Sigmoid colon (tissue), 7 donors: ENCODE measurements at regions of chr9 and their contacts with region 1.

Region 1: GRCh38 chr9:110256380-110257096 is at the start of gene TXN:
- DNase-seq: peak; percentile 94
- H3K4me3 ChIP-seq: peak within 1 kb of the TSS; percentile 75 to 95 (median 82)
- H3K27ac ChIP-seq: peak within 1 kb of the TSS; percentile 89 to 95 (median 90)
- H3K4me1 ChIP-seq: peaks cover 0 to 27% (median 24%) of the 10 kb centered on the region in 4 donors
- H3K27me3 ChIP-seq: no peaks in the 10 kb centered on the region
- CTCF ChIP-seq: no peak
- EP300 ChIP-seq: peak; percentile 40 to 88 (median 74)
- POLR2A ChIP-seq: peak; percentile 39 to 61
- total RNA-seq, gene TXN: 94.9 to 211 (median 158) TPM

Region 2: DNA sequence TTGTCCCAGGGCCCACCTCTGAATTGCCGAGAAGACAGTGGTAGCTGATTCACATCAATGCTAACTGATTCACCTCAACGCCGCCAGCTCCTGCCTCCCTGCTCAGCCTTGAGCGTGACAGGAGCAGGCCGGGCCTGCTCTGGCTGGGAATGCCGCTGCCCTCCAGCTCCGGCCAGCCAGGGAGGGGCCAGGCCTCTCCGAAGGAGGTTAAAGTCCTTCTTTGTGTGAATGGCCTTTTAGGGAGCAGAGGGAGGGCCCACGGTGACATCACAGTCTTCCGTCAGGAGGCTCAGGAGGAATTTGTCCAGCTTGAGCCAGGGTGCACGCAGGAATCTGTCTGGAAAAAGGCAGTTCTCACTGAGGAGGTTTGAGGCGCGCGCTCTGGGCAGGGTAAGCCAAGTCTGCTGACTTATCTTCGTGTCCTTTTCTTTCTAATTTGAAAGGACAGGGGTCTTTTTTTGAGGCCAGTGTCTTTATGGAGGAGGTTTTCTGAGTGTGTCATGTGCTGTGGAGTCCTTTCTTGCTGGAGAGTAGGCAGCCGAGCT is 131.3 kb before region 1 on chr9:
- intact Hi-C with region 1: loop called (anchors 5 kb)
- DNase-seq: peak; percentile 97
- H3K4me3 ChIP-seq: peak overlapping the region; percentile 25 to 47 (median 38)
- H3K27ac ChIP-seq: peak overlapping the region; percentile 87 to 91 (median 90)
- H3K4me1 ChIP-seq: peaks cover 0 to 74% (median 65%) of the 10 kb centered on the region in 4 donors
- H3K27me3 ChIP-seq: no peaks in the 10 kb centered on the region
- CTCF ChIP-seq: no peak
- EP300 ChIP-seq: peak in 2 of 4 donors; percentile 61 to 74
- POLR2A ChIP-seq: peak in 1 of 2 donors; percentile 64

Region 3: DNA sequence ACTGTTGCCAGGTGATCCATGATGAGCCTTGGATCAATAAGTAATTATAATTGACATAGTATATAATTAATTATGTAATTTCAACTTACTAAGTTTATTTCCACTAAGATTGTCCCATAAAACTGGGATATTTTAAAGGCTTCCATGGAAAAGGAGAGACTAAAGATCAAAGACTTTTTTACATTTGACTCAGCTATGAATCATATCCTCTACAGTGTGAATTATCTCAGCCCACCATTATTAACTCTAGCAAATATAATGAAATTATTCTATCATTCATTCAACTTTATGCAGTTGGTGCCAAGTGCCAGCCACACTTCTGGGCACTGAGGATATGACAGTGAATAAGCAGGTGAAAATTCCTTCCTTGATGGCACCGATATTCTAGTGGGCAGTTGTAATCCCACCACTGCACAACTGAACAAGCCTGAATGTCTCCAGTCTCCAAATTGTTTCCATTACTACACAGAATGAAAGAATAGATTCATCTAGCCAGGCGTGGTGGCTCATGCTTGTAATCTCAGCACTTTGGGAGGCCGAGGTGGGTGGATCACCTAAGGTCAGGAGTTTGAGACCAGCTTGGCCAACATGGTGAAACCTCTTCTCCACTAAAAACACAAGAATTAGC is 21.7 kb after region 1 on chr9:
- intact Hi-C with region 1: no loop called
- DNase-seq: no peak
- H3K4me3 ChIP-seq: no peak overlapping the region
- H3K27ac ChIP-seq: no peak overlapping the region
- H3K4me1 ChIP-seq: no peaks in the 10 kb centered on the region
- H3K27me3 ChIP-seq: no peaks in the 10 kb centered on the region
- CTCF ChIP-seq: no peak
- EP300 ChIP-seq: no peak
- POLR2A ChIP-seq: no peak